ENCODE measurements at regions of chr15 and their contacts with region 1.

Region 1: DNA sequence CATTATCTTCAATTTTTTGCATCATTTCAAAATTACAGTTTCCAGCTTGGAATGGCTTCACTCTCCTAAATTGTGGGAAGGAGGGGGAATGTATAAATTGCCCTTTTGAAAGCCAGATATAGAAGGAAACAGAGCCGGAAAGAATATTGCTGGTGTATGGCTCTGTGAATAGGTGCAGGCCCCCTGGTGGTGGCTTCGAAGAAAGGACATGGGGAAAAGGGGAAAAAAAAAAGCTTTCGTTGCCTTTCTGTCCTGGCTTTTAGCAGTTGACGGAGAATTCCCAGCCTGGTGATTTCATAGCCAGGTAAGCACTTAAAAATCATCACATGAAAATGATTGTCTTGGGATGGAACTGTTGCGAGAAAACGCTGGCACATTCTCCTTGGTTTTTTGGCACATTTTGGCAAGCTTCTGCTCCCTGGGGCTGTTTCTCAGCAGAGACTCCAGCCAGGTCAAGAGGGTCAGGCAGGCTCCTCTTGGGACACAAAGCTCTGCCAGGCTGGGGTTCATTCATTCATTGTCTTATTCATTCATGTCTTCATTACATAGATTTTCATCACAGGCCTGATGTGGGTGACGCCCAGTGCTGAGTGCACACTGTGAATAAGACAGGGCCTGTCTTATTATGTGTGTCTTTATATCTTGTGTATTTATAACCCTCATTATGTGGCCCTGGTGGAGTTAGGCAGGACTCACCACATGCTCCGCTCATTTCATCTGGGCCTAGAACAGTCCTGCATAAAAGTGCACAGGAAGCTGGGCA is 300.0 kb upstream of the TPM1 start:
- DNase-seq: no peak
- ATAC-seq: peak; percentile 87

Region 2: GRCh38 chr15:62896978-62897647 is 154.5 kb after region 1 on chr15:
- intact Hi-C with region 1: no loop called
- DNase-seq: peak; percentile 91
- ATAC-seq: peak; percentile 95

Region 3: DNA sequence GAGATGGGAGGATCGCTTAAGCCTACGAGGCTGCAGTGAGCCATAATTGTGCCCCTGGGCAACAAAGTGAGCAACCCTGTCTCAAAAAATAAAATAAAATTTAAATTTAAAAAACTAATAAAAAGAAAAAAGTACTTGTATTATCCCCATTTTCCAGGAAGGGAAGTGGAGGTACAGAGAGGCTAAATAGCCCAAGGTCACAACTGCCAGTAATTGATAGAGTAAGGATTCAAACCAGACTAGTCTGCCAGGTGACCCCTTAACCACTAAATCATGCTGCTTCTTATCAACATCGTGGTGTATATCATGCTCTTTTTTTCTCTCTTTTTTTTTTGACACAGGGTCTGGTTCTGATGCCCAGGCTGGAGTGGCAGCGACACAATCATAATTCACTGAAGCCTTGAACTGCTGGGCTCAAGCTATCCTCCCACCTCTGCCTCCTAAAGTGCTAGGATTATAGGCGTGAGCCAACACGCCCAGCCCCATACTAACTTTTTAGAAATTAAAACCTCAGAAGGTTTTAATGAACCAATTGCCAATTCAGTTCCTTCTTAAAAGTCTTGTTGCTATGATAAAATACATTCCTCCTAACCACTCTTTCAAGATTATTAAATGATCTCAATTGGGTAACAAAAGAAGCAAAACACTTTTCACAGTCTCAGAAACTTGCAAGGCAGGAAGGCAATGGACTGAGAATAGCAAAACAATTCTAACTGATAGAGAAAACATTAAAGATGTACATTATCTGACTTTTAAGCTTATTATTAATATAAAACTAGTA is 1060.7 kb after region 1 on chr15:
- intact Hi-C with region 1: loop called (anchors 5 kb)
- DNase-seq: no peak
- ATAC-seq: no peak

Measured in sciatic nerve (tissue), 2 donors.